Posterior cingulate gyrus (tissue), 11 donors: ENCODE measurements at regions of chr2 and their contacts with region 1.

Region 1: GRCh38 chr2:112726497-112727190 is 5.8 kb downstream of the NT5DC4 start:
- DNase-seq: peak; percentile 78 to 98 (median 90)

Region 2: DNA sequence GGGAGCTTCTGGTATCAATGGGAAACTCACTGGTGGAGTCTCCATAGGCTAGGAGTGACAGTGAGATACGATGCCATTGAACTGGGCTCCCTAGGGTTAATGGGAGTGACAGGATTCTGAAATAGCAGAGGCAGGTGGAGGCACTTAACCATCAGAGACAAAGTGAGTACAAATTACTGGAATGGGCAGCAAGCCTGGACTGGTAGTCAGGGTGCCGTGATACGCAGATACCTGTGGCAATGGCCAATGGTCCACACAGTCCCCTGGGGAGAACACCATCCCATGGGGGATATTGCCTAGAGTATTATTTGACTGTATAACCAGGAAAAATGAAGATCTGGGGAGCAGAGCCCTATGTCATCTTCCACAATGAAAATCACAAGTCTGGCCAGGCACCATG is 124.9 kb before region 1 on chr2:
- intact Hi-C with region 1: loop called (anchors 5 kb)
- DNase-seq: peak in 1 of 10 donors; percentile 49

Region 3: GRCh38 chr2:112803691-112804521 is 77.3 kb after region 1 on chr2:
- intact Hi-C with region 1: no loop called
- DNase-seq: no peak